Dendritic cell treated with granulocyte-macrophage colony-stimulating factor and Interleukin-4, amounts not matched to agents 40 ng/mL and 50 ng/mL, for 4 days (primary cell): ENCODE measurements at regions of chr14 and their contacts with region 1.

Region 1: GRCh38 chr14:24114536-24115450 is at the starts of genes DCAF11 and NRL:
- H3K4me3 Mint-ChIP-seq: peak within 1 kb of the TSS; percentile 88
- H3K27ac Mint-ChIP-seq: peak within 1 kb of the TSS; percentile 100
- H3K4me1 Mint-ChIP-seq: peaks cover 41% of the 10 kb centered on the region
- H3K27me3 Mint-ChIP-seq: no peaks in the 10 kb centered on the region

Region 2: GRCh38 chr14:24135834-24136542 is 21.2 kb after region 1 on chr14 and contains the start of gene PSME1:
- intact Hi-C with region 1: loop called (anchors 1 kb)
- H3K4me3 Mint-ChIP-seq: peak within 1 kb of the TSS; percentile 85
- H3K27ac Mint-ChIP-seq: peak within 1 kb of the TSS; percentile 76
- H3K4me1 Mint-ChIP-seq: peaks cover 64% of the 10 kb centered on the region
- H3K27me3 Mint-ChIP-seq: no peaks in the 10 kb centered on the region

Region 3: DNA sequence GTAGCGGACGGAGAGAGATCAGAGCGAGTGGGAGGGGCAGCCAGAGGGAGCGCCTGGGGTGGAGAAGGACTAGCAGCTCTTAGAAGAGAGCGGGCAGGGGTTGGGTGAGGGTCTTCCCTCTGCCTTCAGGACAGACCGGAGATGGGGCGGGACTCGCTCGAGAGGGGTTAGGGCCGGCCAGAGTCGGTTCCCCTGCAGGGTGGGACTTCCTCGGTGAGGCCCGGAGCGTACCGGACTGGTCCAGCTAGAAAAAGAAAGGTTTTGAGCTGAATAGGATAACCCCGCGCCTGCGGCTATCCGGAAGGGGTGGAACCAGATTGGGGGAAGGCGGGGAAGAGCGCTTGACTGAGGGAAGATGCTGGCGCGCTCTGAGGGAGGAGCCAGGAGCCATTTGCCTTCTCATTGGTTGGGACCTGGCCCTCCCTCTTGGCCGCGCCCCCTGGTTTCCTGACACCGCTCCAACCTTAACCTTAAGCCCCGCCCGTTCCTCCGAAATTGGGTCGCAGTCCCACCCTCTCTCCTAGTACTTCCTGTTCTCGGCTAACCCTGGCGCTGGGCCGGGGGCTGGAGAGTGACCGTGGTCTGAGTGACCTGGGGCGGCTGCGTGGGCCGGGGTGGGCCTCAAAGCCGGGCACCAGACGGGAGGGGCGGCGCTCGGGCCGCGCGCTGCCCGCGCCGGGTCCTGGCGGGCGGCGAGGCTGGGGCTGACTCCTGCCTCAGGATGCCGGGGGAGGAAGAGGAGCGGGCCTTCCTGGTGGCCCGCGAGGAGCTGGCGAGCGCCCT is 32.4 kb after region 1 on chr14 and contains the start of gene RNF31:
- intact Hi-C with region 1: loop called (anchors 1 kb)
- H3K4me3 Mint-ChIP-seq: peak within 1 kb of the TSS; percentile 98
- H3K27ac Mint-ChIP-seq: peak within 1 kb of the TSS; percentile 91
- H3K4me1 Mint-ChIP-seq: peaks cover 59% of the 10 kb centered on the region
- H3K27me3 Mint-ChIP-seq: no peaks in the 10 kb centered on the region

Region 4: GRCh38 chr14:24188251-24189058 is 73.7 kb after region 1 on chr14 and contains the start of gene IPO4:
- intact Hi-C with region 1: loop called (anchors 1 kb)
- H3K4me3 Mint-ChIP-seq: peak within 1 kb of the TSS; percentile 85
- H3K27ac Mint-ChIP-seq: peak within 1 kb of the TSS; percentile 81
- H3K4me1 Mint-ChIP-seq: peaks cover 47% of the 10 kb centered on the region
- H3K27me3 Mint-ChIP-seq: no peaks in the 10 kb centered on the region

Region 5: DNA sequence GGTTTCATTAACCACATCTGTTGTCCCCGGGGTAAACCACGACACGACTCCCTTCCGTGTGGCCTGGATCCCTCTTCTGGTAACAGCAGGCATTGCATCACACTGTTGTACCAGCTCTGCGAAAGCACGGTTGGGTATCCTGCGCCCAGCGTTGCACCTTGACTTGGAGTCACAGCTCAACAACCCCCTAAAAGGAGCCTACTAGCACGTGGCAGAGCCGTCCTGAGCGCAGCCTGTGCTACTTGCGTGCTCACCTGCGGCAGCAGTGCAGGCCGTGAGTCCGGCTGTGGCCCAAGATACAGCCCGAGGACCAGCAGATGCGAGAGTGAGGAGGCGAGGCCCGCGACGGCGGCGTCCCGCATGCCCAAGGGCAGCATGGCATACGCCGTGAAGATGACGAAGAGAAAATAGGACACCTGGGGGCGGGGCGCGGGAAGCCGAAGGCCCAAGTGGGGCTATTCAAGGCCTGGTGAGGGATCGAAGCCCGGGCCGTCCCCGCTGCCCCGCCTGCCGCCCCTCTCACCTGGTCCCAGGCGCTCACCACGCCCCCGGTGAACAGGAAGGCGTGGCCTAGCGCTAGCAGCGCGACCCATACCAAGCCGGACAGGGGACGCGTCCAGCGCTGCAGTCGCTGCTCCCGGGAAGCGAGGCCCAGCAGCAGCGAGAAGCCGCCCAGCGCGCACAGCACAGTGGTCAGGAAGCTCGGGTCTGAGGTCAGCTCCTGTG is 217.6 kb after region 1 on chr14:
- intact Hi-C with region 1: no loop called
- H3K4me3 Mint-ChIP-seq: peak overlapping the region; percentile 67
- H3K27ac Mint-ChIP-seq: peak overlapping the region; percentile 76
- H3K4me1 Mint-ChIP-seq: peaks cover 97% of the 10 kb centered on the region
- H3K27me3 Mint-ChIP-seq: peaks cover 39% of the 10 kb centered on the region